GM10248 (cell line): ENCODE measurements at regions of chr1 and their contacts with region 1.

Region 1: DNA sequence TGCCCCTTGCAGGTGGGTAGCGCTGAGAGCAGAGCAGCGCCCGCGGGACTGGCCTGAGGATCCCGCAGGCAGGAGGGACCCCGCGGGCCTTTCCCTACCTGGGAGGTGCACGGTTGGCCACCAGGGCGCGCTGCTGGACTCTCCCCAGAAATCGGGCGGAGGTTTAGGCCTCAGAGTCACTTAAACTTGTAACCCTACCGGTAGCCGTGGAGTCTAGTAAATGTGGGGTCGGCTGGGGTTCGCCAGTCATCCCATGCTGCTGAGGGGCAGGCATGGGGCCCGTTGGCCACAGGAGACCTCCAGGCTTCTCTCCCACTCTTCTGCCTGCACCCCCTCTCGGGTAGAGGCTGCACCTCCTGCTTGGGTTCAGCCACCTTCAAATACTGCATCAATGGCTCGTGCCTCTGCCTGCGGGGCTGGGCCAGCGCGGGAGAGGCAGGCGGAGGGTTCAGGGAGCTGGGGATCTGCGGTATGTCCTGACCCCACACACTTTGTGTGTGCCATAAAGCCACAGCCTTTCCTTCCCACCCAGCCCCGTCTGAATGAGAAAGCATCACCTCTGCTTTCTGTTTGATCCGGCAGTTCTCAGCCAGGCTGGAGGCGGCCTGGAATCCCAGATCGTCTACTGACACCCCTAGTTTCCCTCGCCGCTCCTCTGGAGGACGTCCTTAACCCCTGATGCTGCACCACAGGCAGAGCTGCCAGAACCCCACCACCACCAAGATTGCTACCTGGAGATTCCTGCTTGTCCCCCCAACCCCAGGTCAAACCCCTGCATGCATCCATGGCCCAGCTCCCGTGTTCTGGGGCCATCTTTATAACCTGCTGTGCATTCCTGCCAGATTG is 12.3 kb upstream of the GSTM4 start:
- DNase-seq: peak; percentile 88
- CTCF ChIP-seq: peak; percentile 92

Region 2: GRCh38 chr1:109548321-109549267 is 95.0 kb before region 1 on chr1 and contains the start of gene GNAI3:
- CTCF ChIA-PET with region 1: interaction called, 99 read pairs
- POLR2A ChIA-PET with region 1: interaction called, 5 read pairs
- DNase-seq: peak; percentile 95
- CTCF ChIP-seq: no peak

Region 3: DNA sequence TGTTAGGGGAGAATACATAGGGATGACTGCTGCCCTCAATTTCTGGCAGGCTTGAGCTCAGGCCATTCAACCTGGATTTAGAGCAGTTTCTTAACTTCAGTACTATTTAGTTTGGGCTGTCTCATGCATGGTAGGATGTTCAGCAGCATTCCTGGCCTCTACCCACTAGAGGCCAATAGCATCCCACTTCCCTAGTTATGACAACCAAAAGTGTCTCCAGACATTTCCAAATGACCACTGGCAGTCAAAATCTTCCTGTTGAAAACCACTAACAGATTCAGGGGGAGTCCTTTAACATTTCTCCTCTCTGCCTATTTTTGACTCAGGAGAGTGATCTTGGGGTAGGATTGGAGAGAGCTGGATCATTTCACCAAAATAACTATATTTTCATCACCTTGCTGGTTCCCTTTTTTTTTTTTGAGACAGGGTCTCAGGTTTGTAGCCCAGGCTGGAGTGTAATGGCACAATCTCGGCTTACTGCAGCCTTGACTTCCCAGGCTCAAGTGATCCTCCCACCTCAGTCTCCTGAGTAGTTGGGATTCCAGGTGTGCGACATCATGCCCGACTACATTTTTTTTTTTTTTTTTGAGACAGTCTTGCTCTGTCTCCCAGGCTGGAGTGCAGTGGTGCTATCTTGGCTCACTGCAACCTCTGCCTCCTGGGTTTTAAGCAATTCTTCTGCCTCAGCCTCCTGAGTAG is 32.9 kb before region 1 on chr1:
- CTCF ChIA-PET with region 1: interaction called, 32 read pairs
- POLR2A ChIA-PET with region 1: interaction called, 6 read pairs
- DNase-seq: no peak
- CTCF ChIP-seq: no peak

Region 4: GRCh38 chr1:109655601-109656519 is 12.3 kb after region 1 on chr1 and contains the start of gene GSTM4:
- CTCF ChIA-PET with region 1: interaction called, 108 read pairs
- POLR2A ChIA-PET with region 1: no interaction called
- DNase-seq: peak; percentile 91
- CTCF ChIP-seq: no peak

Region 5: GRCh38 chr1:109697088-109697487 is 53.5 kb after region 1 on chr1:
- CTCF ChIA-PET with region 1: no interaction called
- POLR2A ChIA-PET with region 1: no interaction called
- DNase-seq: no peak
- CTCF ChIP-seq: no peak

Region 6: DNA sequence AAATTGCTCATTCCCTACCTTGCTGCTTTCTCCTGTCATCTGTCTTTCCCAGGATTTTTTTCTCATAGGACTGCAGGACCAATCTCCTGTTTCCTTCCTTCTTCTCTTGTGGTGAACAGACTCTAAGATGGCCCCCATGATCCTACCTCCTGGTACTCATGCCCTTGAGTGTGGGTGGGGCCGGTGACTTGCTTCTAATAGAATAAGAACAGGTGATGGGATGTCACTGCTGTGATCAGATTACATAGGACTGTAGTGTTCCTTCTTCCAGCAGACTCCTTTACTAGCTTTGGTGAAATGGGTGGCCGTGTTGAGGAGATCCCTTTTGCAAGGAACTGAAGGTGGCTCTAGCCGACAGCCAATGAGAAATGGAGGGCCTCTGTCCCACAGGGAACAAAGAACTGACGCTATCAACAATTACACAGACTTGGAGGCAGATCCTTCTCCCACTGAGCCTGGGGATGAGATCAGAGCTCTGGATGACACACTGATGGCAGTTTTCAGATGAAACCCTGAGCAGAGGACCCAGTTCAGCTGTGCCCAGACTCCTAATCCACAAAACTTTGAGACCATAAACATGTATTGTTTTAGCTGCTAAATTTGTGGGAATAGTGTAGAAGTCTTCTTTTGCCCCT is 89.7 kb after region 1 on chr1:
- CTCF ChIA-PET with region 1: interaction called, 13 read pairs
- POLR2A ChIA-PET with region 1: no interaction called
- DNase-seq: no peak
- CTCF ChIP-seq: no peak

Region 7: GRCh38 chr1:110011527-110012041 is 368.0 kb after region 1 on chr1:
- CTCF ChIA-PET with region 1: interaction called, 25 read pairs
- POLR2A ChIA-PET with region 1: no interaction called
- DNase-seq: peak; percentile 80
- CTCF ChIP-seq: peak; percentile 50